Activated CD4-positive, alpha-beta memory T cell treated with anti-CD3 and anti-CD28 coated beads for 36 hours (primary cell): ENCODE measurements at regions of chr18 and their contacts with region 1.

Region 1: GRCh38 chr18:9147440-9148202 is 11.0 kb downstream of the ANKRD12 start:
- DNase-seq: peak; percentile 25
- H3K4me3 Mint-ChIP-seq: peak overlapping the region; percentile 7
- H3K27ac Mint-ChIP-seq: peak overlapping the region; percentile 78
- H3K4me1 Mint-ChIP-seq: peaks cover 71% of the 10 kb centered on the region
- H3K27me3 Mint-ChIP-seq: no peaks in the 10 kb centered on the region

Region 2: DNA sequence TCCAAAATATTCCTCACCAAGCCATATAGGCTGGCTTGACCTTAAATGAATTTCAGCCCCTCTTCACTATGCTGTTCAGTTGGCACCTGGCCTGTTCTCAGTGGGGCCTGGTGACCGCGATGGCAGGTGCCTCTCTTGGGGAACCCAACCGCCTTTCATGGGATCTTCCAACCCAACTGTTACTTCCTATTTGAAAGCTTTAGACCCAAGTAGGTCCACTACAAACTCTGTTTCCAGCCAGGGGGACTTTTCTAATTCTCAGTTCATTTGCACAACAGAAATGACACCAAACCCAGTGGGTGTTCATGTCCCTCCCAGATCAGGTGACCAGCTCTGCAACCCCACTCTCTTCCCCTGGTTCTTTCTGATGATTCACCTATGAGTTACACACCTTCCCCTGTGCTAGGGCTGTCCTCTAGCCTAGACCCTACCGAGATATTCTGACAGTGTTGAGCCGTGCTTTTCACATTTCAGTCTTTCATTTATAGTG is 80.8 kb before region 1 on chr18:
- CTCF ChIA-PET with region 1: interaction called, 31 read pairs
- POLR2A ChIA-PET with region 1: no interaction called
- intact Hi-C with region 1: no loop called
- DNase-seq: no peak
- H3K4me3 Mint-ChIP-seq: no peak overlapping the region
- H3K27ac Mint-ChIP-seq: peak overlapping the region; percentile 61
- H3K4me1 Mint-ChIP-seq: peaks cover 20% of the 10 kb centered on the region
- H3K27me3 Mint-ChIP-seq: no peaks in the 10 kb centered on the region

Region 3: DNA sequence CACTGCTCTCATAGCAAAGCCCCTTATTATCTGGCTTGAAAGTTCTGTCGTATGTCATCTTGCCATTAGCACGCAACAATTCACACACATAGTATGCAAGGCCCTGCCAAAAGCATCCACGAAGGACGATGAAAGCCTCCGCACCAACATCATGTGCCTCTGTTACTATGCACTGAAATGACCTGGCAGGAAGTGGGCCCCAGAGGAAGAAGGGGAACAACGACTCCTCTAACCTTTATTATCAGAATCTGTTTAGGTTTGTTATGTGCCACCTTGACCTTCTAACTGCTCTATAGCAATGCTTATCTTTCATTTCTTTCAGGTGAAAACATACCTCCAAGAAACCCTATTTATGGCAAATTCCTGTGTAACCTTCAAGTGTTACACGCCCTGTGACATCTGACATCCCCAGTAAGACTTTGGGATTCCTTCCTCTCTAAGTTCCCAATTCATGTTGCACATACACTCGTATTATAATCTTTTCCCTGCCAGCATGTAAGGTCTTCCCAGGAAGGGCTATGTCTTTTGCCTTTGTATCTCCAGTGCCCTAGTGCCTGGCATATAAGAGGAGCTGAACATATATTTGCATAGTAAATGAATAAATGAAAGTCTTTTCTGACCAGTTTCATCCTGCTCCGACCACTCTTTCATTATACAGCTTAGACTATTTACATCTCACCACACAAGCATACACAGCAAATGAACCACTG is 52.2 kb before region 1 on chr18:
- CTCF ChIA-PET with region 1: no interaction called
- POLR2A ChIA-PET with region 1: interaction called, 10 read pairs
- intact Hi-C with region 1: no loop called
- DNase-seq: peak; percentile 87
- H3K4me3 Mint-ChIP-seq: peak overlapping the region; percentile 68
- H3K27ac Mint-ChIP-seq: peak overlapping the region; percentile 100
- H3K4me1 Mint-ChIP-seq: peaks cover 68% of the 10 kb centered on the region
- H3K27me3 Mint-ChIP-seq: no peaks in the 10 kb centered on the region

Region 4: DNA sequence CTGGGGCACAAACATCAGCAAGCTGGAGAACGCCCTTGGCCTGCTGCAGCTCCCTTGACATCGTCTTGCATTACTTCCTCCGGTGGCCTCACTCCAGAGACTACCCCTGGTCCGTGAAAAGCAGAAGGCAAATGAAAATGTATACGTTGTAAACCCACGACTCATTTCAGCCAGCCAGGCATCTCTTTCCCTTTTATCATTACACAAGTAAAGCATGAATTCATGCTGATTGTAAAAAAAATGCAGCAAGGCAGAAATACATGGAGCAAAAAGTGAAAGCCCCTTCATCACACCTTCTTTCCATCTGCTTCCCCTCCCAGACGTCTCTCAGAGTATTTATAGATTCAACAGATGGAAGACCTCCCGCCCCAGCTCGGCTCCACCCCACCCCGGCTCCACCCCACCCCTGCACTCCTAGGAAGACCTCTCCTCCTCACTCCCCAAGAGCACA is 286.1 kb after region 1 on chr18:
- CTCF ChIA-PET with region 1: no interaction called
- POLR2A ChIA-PET with region 1: no interaction called
- intact Hi-C with region 1: no loop called
- DNase-seq: no peak
- H3K4me3 Mint-ChIP-seq: no peak overlapping the region
- H3K27ac Mint-ChIP-seq: no peak overlapping the region
- H3K4me1 Mint-ChIP-seq: no peaks in the 10 kb centered on the region
- H3K27me3 Mint-ChIP-seq: peaks cover 9% of the 10 kb centered on the region

Region 5: DNA sequence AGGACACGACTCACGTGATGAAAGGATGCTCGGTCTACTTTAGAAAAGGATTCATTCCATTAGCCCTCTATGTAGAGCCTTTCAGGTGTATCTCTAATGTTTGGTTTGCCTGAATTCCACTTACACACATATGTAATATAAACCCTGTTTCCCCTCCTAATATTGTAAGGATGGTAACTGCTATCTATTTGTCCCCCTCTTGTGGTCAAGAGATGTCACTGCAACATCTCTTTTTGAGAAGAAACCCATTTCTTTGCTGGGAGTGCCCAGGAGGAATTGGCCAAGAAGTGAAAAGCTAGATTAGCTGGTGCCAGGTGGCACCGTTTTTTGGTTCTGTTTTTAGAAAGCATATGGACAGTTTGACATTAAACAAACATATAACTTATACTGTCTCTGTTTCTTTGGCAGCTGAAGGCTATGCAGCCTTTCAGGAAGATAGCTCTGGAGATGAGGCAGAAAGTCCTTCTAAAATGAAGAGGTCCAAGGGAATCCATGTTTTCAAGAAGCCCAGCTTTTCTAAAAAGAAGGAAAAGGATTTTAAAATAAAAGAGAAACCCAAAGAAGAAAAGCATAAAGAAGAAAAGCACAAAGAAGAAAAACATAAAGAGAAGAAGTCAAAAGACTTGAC is 368.9 kb after region 1 on chr18:
- CTCF ChIA-PET with region 1: interaction called, 7 read pairs
- POLR2A ChIA-PET with region 1: no interaction called
- intact Hi-C with region 1: loop called (anchors 5 kb)
- DNase-seq: no peak
- H3K4me3 Mint-ChIP-seq: no peak overlapping the region
- H3K27ac Mint-ChIP-seq: no peak overlapping the region
- H3K4me1 Mint-ChIP-seq: peaks cover 3% of the 10 kb centered on the region
- H3K27me3 Mint-ChIP-seq: no peaks in the 10 kb centered on the region